ENCODE measurements at regions of chr1 and their contacts with region 1.

Region 1: GRCh38 chr1:155017041-155017945 is 14.7 kb downstream of the ZBTB7B start:
- DNase-seq: peak; percentile 99
- H3K4me3 Mint-ChIP-seq: peak overlapping the region; percentile 62
- H3K27ac Mint-ChIP-seq: peak overlapping the region; percentile 80
- H3K4me1 Mint-ChIP-seq: peaks cover 78% of the 10 kb centered on the region
- H3K27me3 Mint-ChIP-seq: no peaks in the 10 kb centered on the region
- CTCF ChIP-seq: peak; percentile 100

Region 2: DNA sequence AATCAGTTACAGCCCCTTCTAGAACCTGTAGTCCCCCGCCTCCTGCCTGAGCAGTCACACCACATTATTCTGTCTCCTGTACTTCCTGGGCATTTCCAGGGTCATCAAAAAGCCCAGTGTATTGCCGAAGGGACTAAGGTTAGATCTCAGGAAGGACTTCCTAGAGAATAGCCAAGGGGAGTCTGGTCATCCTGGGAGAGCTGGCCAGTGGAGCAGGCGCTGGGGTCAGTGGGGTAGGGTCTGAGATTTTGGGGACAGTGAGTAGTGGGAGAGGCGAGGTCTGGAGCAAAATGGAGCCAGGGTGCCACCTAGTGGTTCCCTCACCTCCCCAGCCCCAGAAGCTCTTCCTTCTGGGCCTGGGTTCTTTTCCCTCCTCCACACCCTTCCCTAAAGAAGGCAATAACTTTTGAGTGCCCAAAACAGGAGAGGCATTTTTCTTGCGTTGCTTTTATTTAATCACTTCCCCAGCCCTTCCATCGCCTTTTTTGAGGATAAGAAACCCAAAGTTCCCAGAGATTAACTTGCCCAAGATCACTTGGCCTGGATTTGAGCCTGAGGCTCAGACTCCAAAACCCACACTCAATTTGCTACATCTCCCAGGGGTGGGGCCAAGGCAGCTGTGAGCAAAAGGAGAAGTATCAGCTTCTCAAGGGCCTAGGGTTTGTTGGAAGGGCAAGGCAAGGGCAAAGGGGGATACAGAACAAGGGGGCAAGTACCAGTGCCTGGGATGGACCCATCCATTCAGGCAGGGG is 73.5 kb before region 1 on chr1:
- CTCF ChIA-PET with region 1: interaction called, 11 read pairs
- POLR2A ChIA-PET with region 1: interaction called, 3 read pairs
- intact Hi-C with region 1: no loop called
- DNase-seq: peak; percentile 66
- H3K4me3 Mint-ChIP-seq: no peak overlapping the region
- H3K27ac Mint-ChIP-seq: no peak overlapping the region
- H3K4me1 Mint-ChIP-seq: peaks cover 12% of the 10 kb centered on the region
- H3K27me3 Mint-ChIP-seq: no peaks in the 10 kb centered on the region
- CTCF ChIP-seq: peak; percentile 91

Region 3: GRCh38 chr1:154961497-154962262 is 55.6 kb before region 1 on chr1 and contains the start of gene PYGO2:
- CTCF ChIA-PET with region 1: interaction called, 9 read pairs
- POLR2A ChIA-PET with region 1: interaction called, 45 read pairs
- intact Hi-C with region 1: no loop called
- DNase-seq: peak; percentile 85
- H3K4me3 Mint-ChIP-seq: peak within 1 kb of the TSS; percentile 73
- H3K27ac Mint-ChIP-seq: peak within 1 kb of the TSS; percentile 33
- H3K4me1 Mint-ChIP-seq: peaks cover 39% of the 10 kb centered on the region
- H3K27me3 Mint-ChIP-seq: no peaks in the 10 kb centered on the region
- CTCF ChIP-seq: peak; percentile 81
- total RNA-seq, gene PYGO2: 32.1 and 35.9 TPM in 2 replicates

Region 4: DNA sequence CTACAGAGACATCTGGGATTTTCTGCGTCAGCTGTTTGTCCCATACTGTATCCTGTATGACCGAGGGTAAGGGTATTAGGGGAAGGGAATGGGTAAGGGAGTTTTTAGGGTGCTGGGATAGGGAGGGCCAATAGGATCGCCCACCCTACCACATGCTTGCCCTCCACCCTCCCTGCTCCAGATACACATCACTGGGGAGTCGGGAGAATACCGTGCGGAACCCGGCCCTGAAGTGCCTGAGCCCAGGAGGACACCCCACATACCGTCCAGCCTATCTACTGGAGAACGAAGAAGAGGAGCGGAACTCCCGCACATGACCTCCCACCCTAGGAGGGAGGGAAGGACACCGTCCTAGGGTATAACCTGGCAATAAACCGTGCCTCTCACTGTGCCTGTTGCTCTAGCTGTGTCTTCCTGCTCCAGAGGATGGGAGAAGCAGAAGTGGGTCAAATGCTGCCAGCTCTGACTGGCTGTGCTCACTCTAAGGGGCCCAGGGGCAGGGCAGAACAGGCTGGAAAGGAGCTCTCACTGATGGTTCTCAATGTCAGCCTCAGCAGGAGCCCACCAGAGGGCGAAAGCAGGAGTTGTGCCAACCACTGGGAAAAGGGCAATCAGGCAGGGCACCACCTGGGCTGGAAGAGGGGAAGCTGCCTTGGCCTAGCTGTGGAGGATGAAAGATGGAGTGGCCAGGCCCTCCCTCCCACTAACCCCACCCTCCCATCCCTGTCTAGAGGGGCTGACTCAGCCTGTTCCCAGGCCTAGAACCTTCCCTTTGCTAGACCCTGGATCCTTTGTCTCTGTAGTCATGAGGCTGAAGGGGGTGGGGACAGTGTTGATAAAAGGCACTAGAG is 24.3 kb before region 1 on chr1:
- CTCF ChIA-PET with region 1: interaction called, 8 read pairs
- POLR2A ChIA-PET with region 1: interaction called, 10 read pairs
- intact Hi-C with region 1: no loop called
- DNase-seq: no peak
- H3K4me3 Mint-ChIP-seq: no peak overlapping the region
- H3K27ac Mint-ChIP-seq: peak overlapping the region; percentile 50
- H3K4me1 Mint-ChIP-seq: peaks cover 32% of the 10 kb centered on the region
- H3K27me3 Mint-ChIP-seq: no peaks in the 10 kb centered on the region
- CTCF ChIP-seq: no peak

Region 5: GRCh38 chr1:155044812-155045690 is 27.8 kb after region 1 on chr1:
- CTCF ChIA-PET with region 1: interaction called, 390 read pairs
- POLR2A ChIA-PET with region 1: interaction called, 56 read pairs
- intact Hi-C with region 1: no loop called
- DNase-seq: peak; percentile 90
- H3K4me3 Mint-ChIP-seq: no peak overlapping the region
- H3K27ac Mint-ChIP-seq: no peak overlapping the region
- H3K4me1 Mint-ChIP-seq: peaks cover 37% of the 10 kb centered on the region
- H3K27me3 Mint-ChIP-seq: no peaks in the 10 kb centered on the region
- CTCF ChIP-seq: peak; percentile 83